ENCODE measurements at regions of chrX and their contacts with region 1.

Region 1: DNA sequence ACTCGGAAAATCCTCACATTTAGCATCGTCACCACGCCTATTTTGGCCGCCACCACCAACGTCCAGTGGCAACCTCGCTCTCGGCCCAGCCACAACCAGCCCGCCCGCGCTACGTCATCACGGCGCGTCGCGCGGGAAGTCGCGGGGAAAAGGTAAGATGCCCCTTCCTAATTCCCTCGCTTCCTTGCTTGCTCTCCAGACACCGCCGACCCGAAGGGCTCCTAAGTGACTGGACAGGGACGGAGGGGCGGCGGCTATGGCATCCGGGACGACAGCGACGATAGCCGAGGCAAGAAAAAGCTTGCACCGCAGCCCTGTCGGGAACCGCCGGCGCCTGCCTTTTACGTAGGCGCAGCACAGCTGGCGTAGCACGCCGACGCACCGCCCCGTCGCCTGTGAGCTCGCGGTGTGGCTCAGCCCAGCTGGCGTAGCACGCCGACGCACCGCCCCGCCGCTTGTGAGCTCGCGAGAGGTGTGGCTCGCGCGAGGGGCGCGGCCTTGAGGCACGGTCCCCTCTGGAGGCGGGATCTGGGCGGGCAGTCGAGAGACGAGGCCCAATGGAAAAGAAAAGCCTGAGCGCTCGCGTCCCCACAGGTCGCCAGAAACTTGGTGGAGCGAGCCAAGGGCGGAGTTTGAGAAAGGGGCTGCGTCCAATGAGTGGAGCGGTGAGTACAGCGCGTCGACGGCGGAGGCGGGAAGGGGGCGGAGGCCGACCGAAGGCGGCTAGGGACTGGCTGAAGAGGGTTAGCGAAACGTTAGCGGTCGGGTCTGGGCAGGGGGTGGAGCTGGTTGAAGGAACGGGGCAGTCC is at the start of gene HDAC6:
- DNase-seq: peak; percentile 96
- ATAC-seq: peak; percentile 89
- H3K4me3 Mint-ChIP-seq: peak within 1 kb of the TSS; percentile 90
- H3K27ac Mint-ChIP-seq: peak within 1 kb of the TSS; percentile 98
- H3K4me1 Mint-ChIP-seq: peaks cover 15% of the 10 kb centered on the region
- H3K27me3 Mint-ChIP-seq: no peaks in the 10 kb centered on the region
- total RNA-seq, gene HDAC6: 59.2 to 69.7 TPM

Region 2: DNA sequence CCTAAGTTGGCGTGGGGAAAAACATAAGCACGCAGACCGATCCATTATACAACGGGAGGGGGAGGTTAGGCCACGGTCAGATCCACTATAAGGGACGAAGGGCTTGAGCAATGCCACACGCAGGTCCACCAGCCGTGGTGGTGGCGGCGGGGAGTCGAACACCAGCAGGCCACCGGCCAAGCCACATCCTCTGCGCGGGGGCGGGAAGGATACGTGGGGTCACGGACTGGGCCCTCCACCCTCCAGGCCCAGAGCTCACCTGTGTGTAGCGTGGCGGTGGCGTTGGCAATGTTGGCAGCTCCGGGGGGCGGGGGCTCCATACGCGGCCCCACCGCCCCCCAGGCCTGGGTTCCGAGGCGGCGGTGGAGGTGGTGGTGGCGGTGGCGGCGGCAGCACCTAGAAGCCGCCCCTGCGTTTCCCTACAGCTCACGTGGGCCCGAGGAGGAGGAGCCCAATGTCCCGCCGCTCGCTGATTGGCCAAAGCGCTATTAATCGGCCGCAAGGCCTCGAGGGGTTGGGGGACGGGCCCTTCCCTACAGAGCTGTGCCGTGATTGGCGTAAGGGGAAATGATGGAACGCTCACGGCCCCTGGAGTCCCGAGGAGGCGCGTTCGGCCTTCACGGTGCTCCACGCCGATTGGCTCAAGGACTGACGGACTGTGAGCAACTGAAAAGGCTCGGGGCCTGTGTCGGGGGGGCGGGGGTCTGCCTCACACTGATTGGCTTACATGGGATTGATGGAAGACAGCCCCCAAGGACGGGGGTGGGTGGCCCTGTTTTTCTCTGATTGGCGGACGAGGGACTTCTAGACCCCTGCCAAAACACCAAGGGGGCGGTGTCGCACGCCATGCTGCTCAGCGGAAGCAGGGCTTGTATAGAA is 1151.1 kb before region 1 on chrX and contains the start of gene ELK1:
- CTCF ChIA-PET with region 1: no interaction called
- POLR2A ChIA-PET with region 1: no interaction called
- intact Hi-C with region 1: loop called in 1 of 2 experiments (anchors 10 kb)
- DNase-seq: peak; percentile 93
- ATAC-seq: peak; percentile 95
- H3K4me3 Mint-ChIP-seq: peak within 1 kb of the TSS; percentile 92
- H3K27ac Mint-ChIP-seq: peak within 1 kb of the TSS; percentile 97
- H3K4me1 Mint-ChIP-seq: peaks cover 44% of the 10 kb centered on the region
- H3K27me3 Mint-ChIP-seq: no peaks in the 10 kb centered on the region
- total RNA-seq, gene ELK1: 96.8 to 117 TPM

Region 3: DNA sequence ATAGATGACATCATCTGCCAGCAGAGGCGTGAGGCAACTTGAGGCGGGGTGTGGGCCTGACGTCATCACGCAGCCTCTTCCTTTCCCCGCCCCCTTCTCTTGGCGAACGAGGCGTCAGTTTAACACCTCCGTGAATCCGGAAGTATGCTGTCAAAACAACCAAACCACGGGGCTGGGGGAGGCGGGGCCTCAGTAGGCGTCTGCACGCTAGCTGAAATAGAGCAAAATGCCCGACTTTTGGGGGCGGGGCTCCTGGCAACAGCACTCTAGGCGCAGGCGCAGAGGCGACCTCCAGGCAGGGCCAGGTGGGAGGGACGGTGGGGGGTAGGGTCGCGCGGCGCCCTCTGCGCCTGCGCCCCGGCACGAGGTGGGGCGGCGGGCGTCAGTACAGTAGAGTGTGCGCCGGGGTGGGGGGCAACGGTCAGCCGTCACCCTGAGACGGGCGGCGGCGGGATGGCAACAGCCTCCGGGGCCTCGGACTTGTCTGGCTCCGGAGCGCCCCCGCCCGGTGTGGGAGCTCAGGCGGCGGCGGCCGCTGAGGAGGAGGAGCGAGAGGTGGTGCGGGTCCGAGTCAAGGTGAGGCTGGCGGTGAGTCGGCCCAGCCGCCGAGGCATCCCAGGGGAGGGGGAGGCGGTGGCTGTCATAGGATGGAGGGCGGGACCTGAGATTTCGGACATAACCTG is 262.0 kb before region 1 on chrX and contains the start of gene TBC1D25:
- CTCF ChIA-PET with region 1: no interaction called
- POLR2A ChIA-PET with region 1: no interaction called
- intact Hi-C with region 1: loop called in 1 of 2 experiments (anchors 1 kb)
- DNase-seq: peak; percentile 98
- ATAC-seq: peak; percentile 80
- H3K4me3 Mint-ChIP-seq: peak within 1 kb of the TSS; percentile 87
- H3K27ac Mint-ChIP-seq: peak within 1 kb of the TSS; percentile 89
- H3K4me1 Mint-ChIP-seq: peaks cover 15% of the 10 kb centered on the region
- H3K27me3 Mint-ChIP-seq: no peaks in the 10 kb centered on the region
- total RNA-seq, gene TBC1D25: 13.2 to 15.2 TPM

Region 4: GRCh38 chrX:48683411-48683982 is 118.0 kb before region 1 on chrX and contains the start of gene WAS:
- CTCF ChIA-PET with region 1: no interaction called
- POLR2A ChIA-PET with region 1: no interaction called
- intact Hi-C with region 1: loop called in 1 of 2 experiments (anchors 5 kb)
- DNase-seq: peak; percentile 68
- ATAC-seq: peak; percentile 85
- H3K4me3 Mint-ChIP-seq: peak within 1 kb of the TSS; percentile 93
- H3K27ac Mint-ChIP-seq: peak within 1 kb of the TSS; percentile 96
- H3K4me1 Mint-ChIP-seq: peaks cover 49% of the 10 kb centered on the region
- H3K27me3 Mint-ChIP-seq: no peaks in the 10 kb centered on the region
- total RNA-seq, gene WAS: 85.9 to 102 TPM

Region 5: DNA sequence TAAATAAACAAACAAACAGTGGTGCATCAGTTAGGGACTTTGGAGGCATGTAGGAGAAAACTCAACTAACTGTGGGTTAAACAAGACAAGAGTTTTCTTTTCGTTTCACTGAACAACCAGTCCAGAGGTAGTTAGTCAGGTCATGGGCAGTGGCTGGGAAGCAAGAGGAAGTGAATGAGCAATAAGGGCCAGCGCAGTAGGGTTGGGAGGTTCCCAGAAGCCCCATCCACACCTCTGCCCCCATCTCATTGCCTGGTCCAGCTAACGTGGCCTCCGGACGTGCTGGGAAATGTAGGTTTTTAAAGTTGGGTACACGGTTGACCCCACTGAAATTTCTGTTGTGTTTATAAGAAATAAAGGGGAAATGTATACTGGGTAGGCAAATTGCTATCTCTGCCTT is 31.2 kb before region 1 on chrX:
- CTCF ChIA-PET with region 1: no interaction called
- POLR2A ChIA-PET with region 1: no interaction called
- intact Hi-C with region 1: no loop called
- DNase-seq: no peak
- ATAC-seq: no peak
- H3K4me3 Mint-ChIP-seq: no peak overlapping the region
- H3K27ac Mint-ChIP-seq: no peak overlapping the region
- H3K4me1 Mint-ChIP-seq: no peaks in the 10 kb centered on the region
- H3K27me3 Mint-ChIP-seq: no peaks in the 10 kb centered on the region

Region 6: DNA sequence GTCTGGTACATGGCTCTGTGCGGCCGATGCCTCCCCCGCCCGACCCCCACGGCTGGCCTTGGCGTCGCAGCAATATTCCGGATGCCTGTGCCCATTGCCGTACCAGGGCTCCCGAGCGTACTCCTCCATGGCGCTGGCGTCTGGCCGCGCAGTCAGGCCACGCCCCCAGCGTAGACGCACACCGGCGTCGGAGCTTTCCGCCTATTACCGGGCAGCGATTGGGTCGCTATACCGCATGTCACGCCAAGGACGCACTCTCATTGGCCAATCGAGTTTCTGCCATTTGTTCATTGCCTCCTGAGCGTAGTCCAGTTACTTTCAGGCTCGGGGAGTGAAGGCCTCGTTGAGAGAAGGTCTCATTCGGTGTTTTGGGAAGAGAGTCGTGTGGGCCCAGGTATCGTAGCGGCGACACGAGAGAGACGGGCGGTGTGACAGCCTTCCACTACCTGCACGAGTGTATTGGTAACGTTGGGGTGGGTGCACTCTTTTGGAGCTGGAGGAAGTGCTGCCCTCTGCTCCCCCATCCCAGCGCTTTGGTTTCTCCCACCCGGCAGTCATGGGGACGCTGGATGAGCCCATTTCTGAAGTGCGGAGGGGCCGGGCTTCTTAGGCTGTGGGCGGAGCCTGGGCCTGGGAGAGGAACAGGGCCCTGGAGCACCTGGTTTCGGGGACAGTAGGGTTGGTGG is 96.3 kb after region 1 on chrX and contains the starts of genes PQBP1 and TIMM17B:
- CTCF ChIA-PET with region 1: no interaction called
- POLR2A ChIA-PET with region 1: no interaction called
- intact Hi-C with region 1: loop called in 1 of 2 experiments (anchors 1 kb)
- DNase-seq: peak; percentile 92
- ATAC-seq: peak; percentile 94
- H3K4me3 Mint-ChIP-seq: peak within 1 kb of the TSS; percentile 81
- H3K27ac Mint-ChIP-seq: peak within 1 kb of the TSS; percentile 94
- H3K4me1 Mint-ChIP-seq: peaks cover 19% of the 10 kb centered on the region
- H3K27me3 Mint-ChIP-seq: no peaks in the 10 kb centered on the region
- total RNA-seq, gene PQBP1: 73.4 to 75.3 TPM
- total RNA-seq, gene TIMM17B: 54.2 to 58.9 TPM

Region 7: DNA sequence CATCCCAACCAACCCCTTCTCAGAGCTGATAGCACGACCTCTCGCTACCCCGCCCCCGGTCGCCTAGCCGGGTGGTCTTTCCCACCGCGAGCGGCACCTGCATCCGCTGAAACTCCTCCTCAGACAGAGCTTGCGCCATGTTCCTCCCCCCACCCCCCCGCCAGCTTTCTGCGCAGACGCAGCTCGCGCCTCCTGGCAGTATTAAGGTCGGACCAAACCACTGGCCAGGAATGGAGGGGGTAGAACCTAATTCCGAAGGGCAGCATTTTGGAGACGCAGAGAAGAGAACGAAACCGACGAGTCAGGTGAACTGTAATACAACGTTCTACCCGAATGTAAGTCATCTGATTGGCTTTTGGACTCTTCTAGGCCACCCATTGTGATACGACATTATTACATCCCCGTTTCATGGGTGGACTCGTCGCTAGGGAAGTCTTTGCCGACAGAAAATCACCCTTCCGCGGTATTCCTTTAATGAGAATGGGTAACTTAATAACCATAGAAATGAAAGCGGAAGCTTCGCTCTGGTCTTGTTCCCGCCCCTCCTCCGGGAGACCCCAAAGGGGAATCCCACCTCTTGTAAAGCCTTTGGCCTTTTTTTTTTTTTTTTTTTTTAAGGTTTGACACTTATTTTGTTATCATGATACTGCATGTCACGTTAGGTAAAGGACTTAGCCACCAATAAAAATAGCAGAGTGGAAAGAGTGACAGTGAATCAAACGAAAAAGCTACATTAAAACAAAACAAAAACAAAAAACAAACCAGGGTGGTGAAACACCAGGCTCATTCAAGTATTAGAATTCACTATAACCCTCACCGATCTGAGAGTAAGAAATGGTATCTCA is 200.8 kb after region 1 on chrX and contains the start of gene GRIPAP1:
- CTCF ChIA-PET with region 1: no interaction called
- POLR2A ChIA-PET with region 1: no interaction called
- intact Hi-C with region 1: loop called in 1 of 2 experiments (anchors 1 kb)
- DNase-seq: peak; percentile 87
- ATAC-seq: peak; percentile 82
- H3K4me3 Mint-ChIP-seq: peak within 1 kb of the TSS; percentile 97
- H3K27ac Mint-ChIP-seq: peak within 1 kb of the TSS; percentile 98
- H3K4me1 Mint-ChIP-seq: peaks cover 34% of the 10 kb centered on the region
- H3K27me3 Mint-ChIP-seq: no peaks in the 10 kb centered on the region
- total RNA-seq, gene GRIPAP1: 57.8 to 63.3 TPM

Region 8: DNA sequence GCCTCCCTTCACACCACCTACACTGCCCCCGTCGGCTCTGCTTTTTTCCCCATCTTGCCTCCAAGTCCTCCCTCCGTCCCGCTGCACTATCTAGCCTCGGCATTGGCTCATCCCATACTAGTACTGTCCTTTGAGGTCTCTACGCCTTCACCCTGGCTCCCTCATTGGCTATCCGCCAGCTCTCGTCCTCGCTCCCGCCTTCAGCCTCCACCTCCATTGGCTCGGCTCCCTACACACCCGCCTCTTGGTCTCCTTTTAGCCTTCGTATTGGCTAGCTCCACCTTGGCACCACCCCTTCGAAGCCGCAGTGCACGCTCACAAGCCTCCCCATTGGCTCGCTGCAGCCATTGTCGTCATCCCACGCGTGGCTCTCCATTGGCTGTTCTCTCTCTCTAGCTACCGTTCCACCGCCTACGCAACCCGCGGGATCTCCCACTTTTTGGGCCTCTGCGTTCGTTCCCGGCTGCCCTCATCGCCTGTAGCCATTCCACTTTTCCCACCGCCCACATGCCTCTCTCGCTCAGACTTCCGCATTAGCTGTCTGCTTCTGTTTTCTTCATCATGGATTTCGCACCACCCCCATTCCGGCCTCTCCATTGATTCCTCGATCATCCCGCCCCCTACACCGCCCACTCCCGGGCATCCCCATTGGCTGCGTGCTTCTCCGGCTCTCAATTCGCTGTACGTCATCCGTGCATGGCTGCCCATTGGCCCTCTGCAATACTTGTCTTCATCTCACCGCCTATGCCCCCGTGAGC is 467.7 kb after region 1 on chrX:
- CTCF ChIA-PET with region 1: no interaction called
- POLR2A ChIA-PET with region 1: no interaction called
- intact Hi-C with region 1: loop called in 1 of 2 experiments (anchors 1 kb)
- DNase-seq: peak; percentile 97
- ATAC-seq: peak; percentile 80
- H3K4me3 Mint-ChIP-seq: peak overlapping the region; percentile 78
- H3K27ac Mint-ChIP-seq: peak overlapping the region; percentile 98
- H3K4me1 Mint-ChIP-seq: peaks cover 50% of the 10 kb centered on the region
- H3K27me3 Mint-ChIP-seq: no peaks in the 10 kb centered on the region

Measured in activated CD4-positive, alpha-beta T cell treated with anti-CD3 and anti-CD28 coated beads for 36 hours (primary cell).